GM10248 (cell line): ENCODE measurements at regions of chr12 and their contacts with region 1.

Region 1: GRCh38 chr12:93502802-93503623 is 35.7 kb downstream of the MRPL42 start:
- DNase-seq: no peak
- CTCF ChIP-seq: peak; percentile 65

Region 2: DNA sequence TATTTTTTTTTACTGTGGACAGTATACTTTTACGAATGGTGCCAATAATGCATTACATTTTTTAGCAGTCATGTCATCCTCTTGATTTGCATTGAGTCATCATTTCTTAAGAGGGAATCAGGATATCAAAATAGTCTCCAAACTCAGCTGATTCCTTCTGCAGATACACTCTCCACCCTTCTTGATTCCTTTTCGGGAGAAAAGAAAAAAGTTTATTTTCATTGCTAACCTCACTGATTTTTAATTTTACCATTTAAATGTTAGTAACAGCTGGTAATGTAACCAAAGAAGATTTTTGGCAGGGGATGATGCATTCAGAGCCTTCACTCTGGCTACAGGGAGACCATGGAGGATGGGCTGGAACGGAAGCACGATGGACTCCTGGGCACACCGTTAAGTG is 11.8 kb after region 1 on chr12:
- CTCF ChIA-PET with region 1: interaction called, 52 read pairs
- POLR2A ChIA-PET with region 1: no interaction called
- DNase-seq: no peak
- CTCF ChIP-seq: no peak

Region 3: DNA sequence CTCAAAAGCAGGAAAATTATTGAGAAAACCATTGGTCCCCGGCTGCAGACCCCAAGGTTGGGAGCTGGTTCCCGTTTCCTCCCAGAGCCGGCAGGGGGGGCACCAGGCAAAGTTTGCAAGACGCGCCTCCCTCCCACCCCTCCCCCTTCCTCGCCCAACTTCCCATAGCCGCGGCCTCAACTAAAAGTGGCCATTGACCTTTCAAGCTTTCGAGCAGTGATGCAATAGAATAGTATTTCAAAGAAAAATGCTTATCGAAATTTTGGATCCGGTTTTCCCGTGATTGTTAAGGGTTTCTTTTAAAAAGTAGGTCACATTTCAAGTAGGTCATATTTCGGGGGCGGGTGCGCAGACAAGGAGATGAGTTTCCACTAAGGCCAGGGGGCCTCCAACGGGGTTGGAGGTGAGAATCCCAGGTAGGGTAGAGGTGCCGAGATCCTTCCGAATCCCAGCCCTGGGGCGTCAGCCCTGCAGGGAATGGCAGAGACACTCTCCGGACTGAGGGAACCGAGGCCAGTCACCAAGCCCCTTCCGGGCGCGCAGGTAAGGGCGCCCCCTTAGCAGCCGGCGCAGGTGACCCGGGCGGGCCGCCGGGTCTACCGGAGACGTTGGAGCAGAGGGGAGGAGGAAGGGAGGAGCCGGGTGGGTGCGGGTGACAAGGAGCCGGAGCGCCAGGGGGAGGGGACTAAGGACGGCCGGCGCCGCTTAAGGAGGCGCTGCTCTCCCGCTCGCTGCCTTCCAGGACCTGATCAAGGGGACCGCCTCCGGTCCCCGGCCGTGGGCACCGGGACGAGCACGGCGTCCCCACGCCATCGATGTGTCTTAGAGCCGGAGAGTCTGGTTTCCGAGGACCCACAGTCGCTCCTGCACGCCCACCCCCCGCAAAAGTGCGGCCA is 66.9 kb after region 1 on chr12:
- CTCF ChIA-PET with region 1: interaction called, 19 read pairs
- POLR2A ChIA-PET with region 1: no interaction called
- DNase-seq: peak; percentile 86
- CTCF ChIP-seq: peak; percentile 76

Region 4: DNA sequence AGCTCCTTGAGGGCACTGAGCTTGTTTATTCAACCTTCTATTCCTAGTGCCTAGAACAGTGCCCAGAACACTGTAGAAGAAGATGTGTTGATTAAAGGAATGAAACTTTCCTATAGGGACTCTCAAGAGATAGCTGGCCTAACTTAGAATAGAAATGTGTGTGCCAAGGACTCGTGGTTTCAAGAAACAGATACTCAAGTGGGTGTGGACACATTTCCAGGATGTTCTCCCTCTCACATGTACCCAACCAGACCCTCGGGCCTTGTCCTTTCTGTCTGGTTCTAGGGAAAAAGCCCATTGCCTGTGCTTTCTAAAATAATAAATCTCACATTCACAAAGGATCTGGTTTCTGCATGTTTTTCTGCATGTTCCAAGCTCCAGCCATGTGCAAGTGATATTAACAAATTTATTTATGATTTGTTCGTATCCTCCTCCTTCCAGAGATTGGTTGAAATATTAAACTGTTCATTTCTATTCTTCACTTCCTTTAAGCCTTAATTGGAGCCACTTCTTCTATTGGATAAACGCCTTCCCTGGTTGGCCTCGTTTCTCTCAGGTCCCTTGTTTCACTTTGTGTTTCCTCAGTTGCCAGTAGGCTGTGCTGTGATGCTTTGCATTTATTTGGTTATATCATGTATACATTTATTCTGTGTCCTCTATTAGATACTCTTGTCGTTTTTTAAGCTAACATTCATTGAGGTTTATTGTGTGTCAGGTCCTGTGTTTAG is 263.9 kb after region 1 on chr12:
- CTCF ChIA-PET with region 1: interaction called, 10 read pairs
- POLR2A ChIA-PET with region 1: no interaction called
- DNase-seq: peak; percentile 37
- CTCF ChIP-seq: peak; percentile 57